Dendritic cell treated with granulocyte-macrophage colony-stimulating factor and Interleukin-4, amounts not matched to agents 40 ng/mL and 50 ng/mL, for 4 days (primary cell): ENCODE measurements at regions of chr3 and their contacts with region 1.

Region 1: GRCh38 chr3:15601397-15602145 is at the starts of genes BTD and HACL1:
- H3K4me3 Mint-ChIP-seq: peak within 1 kb of the TSS; percentile 96
- H3K27ac Mint-ChIP-seq: peak within 1 kb of the TSS; percentile 94
- H3K4me1 Mint-ChIP-seq: peaks cover 40% of the 10 kb centered on the region
- H3K27me3 Mint-ChIP-seq: no peaks in the 10 kb centered on the region

Region 2: DNA sequence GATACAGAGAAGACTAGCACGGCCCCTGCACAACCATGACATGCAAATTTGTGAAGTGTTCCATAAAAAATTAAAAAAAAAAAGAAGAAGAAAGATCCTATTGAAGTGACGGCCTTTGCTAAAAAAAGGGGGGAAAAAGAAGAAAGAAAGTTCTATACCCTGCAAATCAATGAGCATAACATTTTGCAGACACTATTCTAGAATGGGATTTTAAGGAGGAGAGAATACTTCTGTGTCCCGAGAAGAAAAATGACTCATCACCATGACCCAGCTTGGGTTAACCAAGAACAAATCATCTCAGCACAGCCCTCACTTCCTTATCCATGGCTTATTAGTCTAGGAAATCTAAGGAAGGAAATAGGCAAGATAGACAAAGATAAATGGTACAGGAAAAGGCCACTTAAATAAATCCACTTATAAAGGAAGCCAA is 261.8 kb before region 1 on chr3:
- intact Hi-C with region 1: no loop called
- H3K4me3 Mint-ChIP-seq: no peak overlapping the region
- H3K27ac Mint-ChIP-seq: no peak overlapping the region
- H3K4me1 Mint-ChIP-seq: peaks cover 31% of the 10 kb centered on the region
- H3K27me3 Mint-ChIP-seq: peaks cover 15% of the 10 kb centered on the region

Region 3: GRCh38 chr3:15427182-15427880 is 174.2 kb before region 1 on chr3 and contains the starts of genes EAF1 and METTL6:
- intact Hi-C with region 1: loop called (anchors 2 kb)
- H3K4me3 Mint-ChIP-seq: peak within 1 kb of the TSS; percentile 96
- H3K27ac Mint-ChIP-seq: peak within 1 kb of the TSS; percentile 91
- H3K4me1 Mint-ChIP-seq: peaks cover 50% of the 10 kb centered on the region
- H3K27me3 Mint-ChIP-seq: no peaks in the 10 kb centered on the region

Region 4: DNA sequence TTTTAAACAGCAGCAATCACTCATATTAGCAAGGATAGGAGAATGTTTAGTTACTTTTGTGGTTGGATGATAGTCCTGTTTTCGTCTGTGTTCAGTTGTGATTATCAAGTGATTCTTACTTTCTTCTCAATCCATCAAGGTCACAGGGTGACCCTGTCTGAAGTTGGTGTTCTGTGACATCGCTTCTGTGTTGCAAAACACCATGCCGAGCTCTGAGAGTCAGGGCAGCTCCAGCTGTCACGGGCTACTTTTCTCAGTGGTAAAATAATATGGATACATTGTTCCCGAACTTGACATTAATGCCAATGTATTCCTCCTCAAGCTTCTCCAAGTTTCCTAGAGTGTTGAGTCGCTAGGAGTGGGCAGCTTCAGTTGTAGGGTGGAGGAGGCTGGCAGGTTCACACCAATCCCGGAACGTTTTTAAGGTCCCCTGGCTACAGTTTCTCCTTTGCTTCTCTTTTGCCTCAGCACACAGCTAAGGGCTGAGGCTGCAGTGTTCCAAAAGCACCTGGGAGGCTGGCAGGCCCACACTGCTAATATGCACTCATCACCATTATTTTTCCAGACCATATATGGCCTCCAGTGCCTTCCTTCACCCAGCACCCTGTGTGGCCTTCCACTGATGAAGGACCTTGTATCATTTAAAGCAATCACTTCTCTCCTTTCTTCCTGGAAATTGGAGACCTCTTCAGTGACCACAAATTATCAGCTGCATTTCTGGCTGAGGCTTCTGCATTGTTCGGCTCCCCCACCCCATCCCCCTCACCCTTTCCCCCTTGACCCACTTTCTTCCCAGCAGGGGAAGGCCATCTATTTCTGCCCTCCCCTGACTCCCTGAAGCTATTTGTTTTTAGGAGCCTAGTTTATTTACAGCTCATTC is 105.9 kb before region 1 on chr3:
- intact Hi-C with region 1: no loop called
- H3K4me3 Mint-ChIP-seq: no peak overlapping the region
- H3K27ac Mint-ChIP-seq: no peak overlapping the region
- H3K4me1 Mint-ChIP-seq: peaks cover 12% of the 10 kb centered on the region
- H3K27me3 Mint-ChIP-seq: peaks cover 2% of the 10 kb centered on the region

Region 5: GRCh38 chr3:16511681-16512434 is 910.3 kb after region 1 on chr3:
- intact Hi-C with region 1: loop called (anchors 5 kb)
- H3K4me3 Mint-ChIP-seq: peak overlapping the region; percentile 98
- H3K27ac Mint-ChIP-seq: peak overlapping the region; percentile 96
- H3K4me1 Mint-ChIP-seq: peaks cover 80% of the 10 kb centered on the region
- H3K27me3 Mint-ChIP-seq: no peaks in the 10 kb centered on the region